Heart left ventricle (tissue), 16 donors: ENCODE measurements at regions of chr20 and their contacts with region 1.

Region 1: GRCh38 chr20:23874747-23875146 is 4.8 kb downstream of the CST5 start:
- DNase-seq: no peak
- ATAC-seq: peak in 2 of 4 donors; percentile 26 to 62
- H3K4me3 ChIP-seq: no peak overlapping the region
- H3K27ac ChIP-seq: no peak overlapping the region
- H3K4me1 ChIP-seq: no peaks in the 10 kb centered on the region
- H3K27me3 ChIP-seq: peaks cover 0 to 36% (median 9%) of the 10 kb centered on the region in 9 donors
- CTCF ChIP-seq: no peak
- POLR2A ChIP-seq: no peak

Region 2: GRCh38 chr20:23823621-23824324 is 51.0 kb before region 1 on chr20:
- intact Hi-C with region 1: loop called in 1 of 10 experiments (anchors 10 kb)
- DNase-seq: no peak
- ATAC-seq: peak in 1 of 4 donors; percentile 25
- H3K4me3 ChIP-seq: no peak overlapping the region
- H3K27ac ChIP-seq: no peak overlapping the region
- H3K4me1 ChIP-seq: no peaks in the 10 kb centered on the region
- H3K27me3 ChIP-seq: no peaks in the 10 kb centered on the region
- CTCF ChIP-seq: no peak
- POLR2A ChIP-seq: no peak

Region 3: DNA sequence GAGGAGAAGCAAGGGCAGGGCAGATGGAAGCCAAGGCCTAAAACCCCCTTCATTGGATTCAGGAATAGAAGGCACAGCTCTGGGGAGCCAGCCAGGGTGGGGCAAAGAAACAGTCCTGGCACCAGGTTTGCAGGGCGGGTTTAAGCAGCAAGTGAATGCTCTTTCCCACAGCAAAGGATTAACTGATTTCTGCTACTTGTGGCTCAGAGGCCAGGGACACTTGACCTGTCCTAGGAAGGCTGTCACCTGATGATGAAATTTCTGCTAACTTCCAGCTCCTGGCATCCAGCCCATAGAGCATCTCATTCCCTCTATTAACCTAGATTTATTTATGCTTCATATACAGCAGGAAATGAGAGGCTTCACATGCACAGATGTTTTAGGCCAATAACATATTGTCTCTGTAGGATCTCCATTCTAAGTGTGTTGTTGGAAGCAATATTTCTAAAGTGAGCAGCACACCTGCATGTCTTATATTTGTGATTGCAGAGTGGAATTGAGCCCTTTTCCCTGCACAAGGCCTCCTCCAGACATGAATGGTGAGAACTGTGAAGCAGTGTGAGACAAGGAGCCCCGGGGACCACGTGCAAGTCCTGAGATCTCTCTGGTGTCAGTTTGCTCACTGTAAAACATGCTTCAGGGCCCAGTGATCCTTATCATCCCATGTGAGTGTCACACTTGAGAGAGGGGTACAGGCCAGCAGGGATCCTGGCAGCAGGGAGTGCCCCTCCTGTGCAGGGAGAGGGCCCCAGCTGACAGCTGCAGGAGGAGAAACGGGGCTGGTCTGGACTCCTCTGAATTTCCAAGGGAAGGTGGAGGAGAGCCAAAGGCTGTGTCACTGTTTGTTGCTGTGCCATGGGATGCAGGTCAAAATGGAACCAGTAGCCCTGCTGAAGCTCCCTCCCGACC is 45.9 kb after region 1 on chr20:
- intact Hi-C with region 1: loop called in 1 of 10 experiments (anchors 5 kb)
- DNase-seq: no peak
- ATAC-seq: peak in 3 of 4 donors; percentile 11 to 59 (median 52)
- H3K4me3 ChIP-seq: no peak overlapping the region
- H3K27ac ChIP-seq: no peak overlapping the region
- H3K4me1 ChIP-seq: peaks cover 0 to 14% (median 0%) of the 10 kb centered on the region in 12 donors
- H3K27me3 ChIP-seq: peaks cover 0 to 12% (median 0%) of the 10 kb centered on the region in 9 donors
- CTCF ChIP-seq: no peak
- POLR2A ChIP-seq: no peak

Region 4: GRCh38 chr20:23954008-23954745 is 79.4 kb after region 1 on chr20:
- intact Hi-C with region 1: no loop called
- DNase-seq: no peak
- ATAC-seq: no peak
- H3K4me3 ChIP-seq: no peak overlapping the region
- H3K27ac ChIP-seq: no peak overlapping the region
- H3K4me1 ChIP-seq: no peaks in the 10 kb centered on the region
- H3K27me3 ChIP-seq: peaks cover 0 to 16% (median 0%) of the 10 kb centered on the region in 9 donors
- CTCF ChIP-seq: no peak
- POLR2A ChIP-seq: no peak